ENCODE measurements at regions of chr1 and their contacts with region 1.

Region 1: GRCh38 chr1:2141036-2141435 is 53.5 kb downstream of the FAAP20 start:
- DNase-seq: no peak
- H3K4me3 ChIP-seq: no peak overlapping the region
- H3K4me3 Mint-ChIP-seq: no peak overlapping the region
- H3K27ac ChIP-seq: no peak overlapping the region
- H3K27ac Mint-ChIP-seq: no peak overlapping the region
- H3K4me1 ChIP-seq: peaks cover 10% of the 10 kb centered on the region
- H3K4me1 Mint-ChIP-seq: peaks cover 4 to 39% (median 18%) of the 10 kb centered on the region in 4 donors
- H3K27me3 ChIP-seq: no peaks in the 10 kb centered on the region
- H3K27me3 Mint-ChIP-seq: no peaks in the 10 kb centered on the region

Region 2: DNA sequence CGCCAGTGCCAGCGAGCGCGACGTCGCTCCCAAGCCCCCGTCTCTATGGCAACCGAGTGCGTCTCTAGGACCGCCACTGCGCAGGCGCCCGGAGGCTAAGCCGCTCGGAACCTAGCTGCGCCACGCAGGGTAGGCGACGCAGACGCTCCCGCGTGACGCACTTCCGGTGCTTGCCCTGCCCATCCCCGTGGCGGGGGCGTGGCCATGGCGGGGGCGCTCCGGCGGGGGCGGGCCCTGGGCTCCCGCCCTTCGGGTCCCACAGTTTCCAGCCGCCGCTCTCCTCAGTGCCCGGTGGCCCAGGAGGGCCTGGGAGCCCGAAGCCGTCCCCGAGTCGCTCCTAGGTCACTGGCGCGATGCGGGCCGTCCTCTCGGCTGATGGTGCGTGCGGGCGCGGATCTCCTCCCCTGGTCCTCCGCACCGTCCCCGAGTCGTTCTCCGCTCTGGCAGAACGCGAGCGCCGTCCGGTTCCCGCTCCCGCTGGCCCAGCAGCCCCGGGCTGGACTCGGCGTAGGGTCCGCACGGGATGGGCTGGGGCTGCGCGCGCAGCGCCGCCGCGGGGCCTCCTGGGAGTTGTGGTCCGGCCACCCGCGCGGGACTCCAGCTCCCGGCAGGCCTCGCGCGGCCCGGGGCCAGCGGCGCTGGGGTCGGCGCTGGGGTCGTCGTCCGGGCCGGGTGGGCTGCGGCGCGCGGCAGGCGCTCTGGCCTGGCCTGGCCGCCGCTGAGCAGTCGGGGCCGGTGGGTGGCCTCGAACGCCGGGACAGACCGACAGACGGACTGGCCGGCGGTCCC is 525.6 kb before region 1 on chr1 and contains the start of gene MIB2:
- CTCF ChIA-PET with region 1: no interaction called
- POLR2A ChIA-PET with region 1: no interaction called
- intact Hi-C with region 1: no loop called
- DNase-seq: peak; percentile 98 to 99 (median 99)
- H3K4me3 ChIP-seq: peak within 1 kb of the TSS; percentile 73 to 89
- H3K4me3 Mint-ChIP-seq: peak within 1 kb of the TSS; percentile 89 to 97 (median 94)
- H3K27ac ChIP-seq: peak within 1 kb of the TSS; percentile 100
- H3K27ac Mint-ChIP-seq: peak within 1 kb of the TSS; percentile 98 to 100 (median 99)
- H3K4me1 ChIP-seq: peaks cover 29% of the 10 kb centered on the region
- H3K4me1 Mint-ChIP-seq: peaks cover 10 to 38% (median 26%) of the 10 kb centered on the region in 4 donors
- H3K27me3 ChIP-seq: no peaks in the 10 kb centered on the region
- H3K27me3 Mint-ChIP-seq: no peaks in the 10 kb centered on the region
- total RNA-seq, gene MIB2: 112 to 114 TPM

Region 3: GRCh38 chr1:2115681-2116341 is 25.2 kb before region 1 on chr1:
- CTCF ChIA-PET with region 1: interaction called, 11 read pairs
- POLR2A ChIA-PET with region 1: no interaction called
- intact Hi-C with region 1: no loop called
- DNase-seq: no peak
- H3K4me3 ChIP-seq: no peak overlapping the region
- H3K4me3 Mint-ChIP-seq: peak overlapping the region in 1 of 8 donors; percentile 59
- H3K27ac ChIP-seq: no peak overlapping the region
- H3K27ac Mint-ChIP-seq: peak overlapping the region in 2 of 7 donors; percentile 3 to 38
- H3K4me1 ChIP-seq: no peaks in the 10 kb centered on the region
- H3K4me1 Mint-ChIP-seq: peaks cover 5 to 17% (median 9%) of the 10 kb centered on the region in 4 donors
- H3K27me3 ChIP-seq: no peaks in the 10 kb centered on the region
- H3K27me3 Mint-ChIP-seq: no peaks in the 10 kb centered on the region

Region 4: GRCh38 chr1:2612978-2613365 is 471.9 kb after region 1 on chr1:
- CTCF ChIA-PET with region 1: no interaction called
- POLR2A ChIA-PET with region 1: no interaction called
- intact Hi-C with region 1: no loop called
- DNase-seq: no peak
- H3K4me3 ChIP-seq: no peak overlapping the region
- H3K4me3 Mint-ChIP-seq: no peak overlapping the region
- H3K27ac ChIP-seq: no peak overlapping the region
- H3K27ac Mint-ChIP-seq: no peak overlapping the region
- H3K4me1 ChIP-seq: no peaks in the 10 kb centered on the region
- H3K4me1 Mint-ChIP-seq: no peaks in the 10 kb centered on the region
- H3K27me3 ChIP-seq: no peaks in the 10 kb centered on the region
- H3K27me3 Mint-ChIP-seq: peaks cover 8 to 9% of the 10 kb centered on the region in 2 donors